CD8-positive, alpha-beta T cell (primary cell): ENCODE measurements at regions of chr14 and their contacts with region 1.

Region 1: DNA sequence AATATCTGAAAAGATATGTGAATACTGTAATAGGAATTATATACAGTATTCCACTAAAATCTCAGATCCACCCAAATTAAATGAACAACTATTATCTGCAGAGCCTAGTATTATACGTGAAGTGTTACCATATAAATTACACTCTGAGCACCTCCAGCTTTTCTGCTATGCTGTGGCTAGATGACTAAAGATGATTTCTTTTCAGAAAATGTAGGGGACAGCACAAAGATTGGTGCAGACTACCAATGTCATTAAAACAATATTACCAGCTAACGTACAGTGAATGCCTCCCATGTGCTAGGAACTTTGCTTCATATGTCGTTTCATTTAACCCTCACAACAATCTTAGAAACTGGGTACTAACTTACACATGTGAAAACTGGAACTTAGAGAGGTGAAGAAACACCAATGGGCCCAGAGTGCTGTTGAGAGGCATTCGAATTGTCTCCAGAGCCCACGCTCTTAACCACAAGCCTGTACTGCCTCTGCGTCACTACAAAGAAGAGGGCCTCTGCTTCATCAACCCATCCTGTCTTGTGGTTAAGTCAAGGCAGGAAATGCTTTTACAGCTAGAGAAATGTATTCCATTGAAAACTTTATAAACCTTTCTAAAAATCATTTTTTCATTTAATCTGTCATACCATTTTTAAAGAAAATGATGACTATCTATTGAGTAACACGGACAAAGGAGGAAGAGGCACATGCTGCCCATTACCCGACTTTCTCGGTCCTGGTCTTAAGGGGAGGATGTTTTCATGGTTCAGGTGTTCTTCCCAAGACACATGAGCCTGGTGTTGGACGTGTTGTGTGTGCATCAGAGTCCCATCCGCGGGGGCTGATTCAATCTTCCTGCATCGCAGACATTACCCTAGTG is 1.3 kb downstream of the GPR65 start:
- DNase-seq: peak; percentile 28 to 95 (median 66)
- ATAC-seq: peak; percentile 88
- H3K4me3 ChIP-seq: peak overlapping the region; percentile 69 to 76
- H3K4me3 Mint-ChIP-seq: peak overlapping the region; percentile 88
- H3K27ac ChIP-seq: peak overlapping the region; percentile 74 to 94
- H3K27ac Mint-ChIP-seq: peak overlapping the region; percentile 96
- H3K4me1 ChIP-seq: peaks cover 63% of the 10 kb centered on the region
- H3K4me1 Mint-ChIP-seq: peaks cover 81% of the 10 kb centered on the region
- H3K27me3 ChIP-seq: no peaks in the 10 kb centered on the region
- H3K27me3 Mint-ChIP-seq: no peaks in the 10 kb centered on the region
- CTCF ChIP-seq: no peak

Region 2: DNA sequence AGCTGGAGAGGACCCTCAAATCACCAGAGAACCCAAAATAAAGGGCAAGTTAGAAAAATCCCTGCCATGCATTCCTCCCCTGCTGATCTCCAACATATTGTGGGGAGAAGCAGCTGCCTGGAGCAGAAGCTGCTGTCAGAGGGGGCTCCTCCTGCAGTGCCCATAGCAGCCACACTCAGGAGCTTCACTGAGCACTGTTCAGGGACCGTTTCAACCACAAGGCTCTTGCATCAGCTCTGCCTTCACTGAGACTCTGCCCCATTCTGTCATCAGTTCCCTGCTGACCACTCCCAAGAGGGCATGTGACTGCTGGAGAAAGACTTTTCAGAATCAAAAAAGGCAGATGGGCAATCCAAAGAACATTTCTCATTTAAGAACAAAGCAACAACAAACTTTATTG is 406.0 kb before region 1 on chr14:
- CTCF ChIA-PET with region 1: no interaction called
- POLR2A ChIA-PET with region 1: no interaction called
- intact Hi-C with region 1: no loop called
- DNase-seq: no peak
- ATAC-seq: no peak
- H3K4me3 ChIP-seq: no peak overlapping the region
- H3K4me3 Mint-ChIP-seq: no peak overlapping the region
- H3K27ac ChIP-seq: no peak overlapping the region
- H3K27ac Mint-ChIP-seq: no peak overlapping the region
- H3K4me1 ChIP-seq: no peaks in the 10 kb centered on the region
- H3K4me1 Mint-ChIP-seq: no peaks in the 10 kb centered on the region
- H3K27me3 ChIP-seq: no peaks in the 10 kb centered on the region
- H3K27me3 Mint-ChIP-seq: no peaks in the 10 kb centered on the region
- CTCF ChIP-seq: no peak

Region 3: GRCh38 chr14:87952307-87953094 is 53.7 kb before region 1 on chr14:
- CTCF ChIA-PET with region 1: no interaction called
- POLR2A ChIA-PET with region 1: interaction called, 10 read pairs
- intact Hi-C with region 1: loop called (anchors 2 to 5 kb)
- DNase-seq: peak in 2 of 9 experiments; percentile 40 to 63
- ATAC-seq: peak; percentile 54
- H3K4me3 ChIP-seq: peak overlapping the region in 1 of 2 experiments; percentile 9
- H3K4me3 Mint-ChIP-seq: peak overlapping the region; percentile 69
- H3K27ac ChIP-seq: peak overlapping the region; percentile 49 to 73
- H3K27ac Mint-ChIP-seq: peak overlapping the region; percentile 91
- H3K4me1 ChIP-seq: peaks cover 30% of the 10 kb centered on the region
- H3K4me1 Mint-ChIP-seq: peaks cover 54% of the 10 kb centered on the region
- H3K27me3 ChIP-seq: no peaks in the 10 kb centered on the region
- H3K27me3 Mint-ChIP-seq: no peaks in the 10 kb centered on the region
- CTCF ChIP-seq: no peak

Region 4: DNA sequence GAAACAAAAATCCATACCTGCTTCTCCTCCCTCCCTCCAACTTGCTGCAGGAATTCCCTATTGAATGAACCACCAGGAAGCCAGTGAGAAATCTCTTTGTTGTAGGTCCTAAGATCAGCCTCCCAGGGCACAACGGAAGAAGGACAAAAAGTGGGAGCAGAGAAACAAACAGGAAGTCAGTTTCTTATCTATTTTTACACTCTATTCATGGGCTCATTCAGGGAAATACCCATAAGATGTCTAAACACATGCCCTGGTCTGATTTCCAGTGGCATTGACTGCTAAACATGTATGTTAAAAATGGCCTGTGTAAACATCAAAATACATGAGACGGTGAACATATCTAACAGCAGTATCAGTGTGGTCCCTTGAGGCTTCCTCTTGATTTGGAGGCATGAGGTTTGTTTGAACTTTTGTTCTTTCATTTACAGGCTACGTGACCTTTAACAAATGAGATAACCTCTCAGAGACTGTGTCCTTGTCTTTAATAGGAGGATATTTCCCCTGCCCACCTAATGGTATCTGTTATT is 17.5 kb after region 1 on chr14:
- CTCF ChIA-PET with region 1: interaction called, 3 read pairs
- POLR2A ChIA-PET with region 1: interaction called, 3 read pairs
- intact Hi-C with region 1: loop called in 1 of 2 experiments (anchors 2 kb)
- DNase-seq: peak in 2 of 9 experiments; percentile 37 to 61
- ATAC-seq: peak; percentile 64
- H3K4me3 ChIP-seq: no peak overlapping the region
- H3K4me3 Mint-ChIP-seq: peak overlapping the region; percentile 42
- H3K27ac ChIP-seq: peak overlapping the region in 1 of 2 experiments; percentile 55
- H3K27ac Mint-ChIP-seq: peak overlapping the region; percentile 79
- H3K4me1 ChIP-seq: peaks cover 60% of the 10 kb centered on the region
- H3K4me1 Mint-ChIP-seq: peaks cover 87% of the 10 kb centered on the region
- H3K27me3 ChIP-seq: no peaks in the 10 kb centered on the region
- H3K27me3 Mint-ChIP-seq: no peaks in the 10 kb centered on the region
- CTCF ChIP-seq: no peak